Dorsolateral prefrontal cortex (tissue), 120 donors: ENCODE measurements at regions of chr1 and their contacts with region 1.

Region 1: DNA sequence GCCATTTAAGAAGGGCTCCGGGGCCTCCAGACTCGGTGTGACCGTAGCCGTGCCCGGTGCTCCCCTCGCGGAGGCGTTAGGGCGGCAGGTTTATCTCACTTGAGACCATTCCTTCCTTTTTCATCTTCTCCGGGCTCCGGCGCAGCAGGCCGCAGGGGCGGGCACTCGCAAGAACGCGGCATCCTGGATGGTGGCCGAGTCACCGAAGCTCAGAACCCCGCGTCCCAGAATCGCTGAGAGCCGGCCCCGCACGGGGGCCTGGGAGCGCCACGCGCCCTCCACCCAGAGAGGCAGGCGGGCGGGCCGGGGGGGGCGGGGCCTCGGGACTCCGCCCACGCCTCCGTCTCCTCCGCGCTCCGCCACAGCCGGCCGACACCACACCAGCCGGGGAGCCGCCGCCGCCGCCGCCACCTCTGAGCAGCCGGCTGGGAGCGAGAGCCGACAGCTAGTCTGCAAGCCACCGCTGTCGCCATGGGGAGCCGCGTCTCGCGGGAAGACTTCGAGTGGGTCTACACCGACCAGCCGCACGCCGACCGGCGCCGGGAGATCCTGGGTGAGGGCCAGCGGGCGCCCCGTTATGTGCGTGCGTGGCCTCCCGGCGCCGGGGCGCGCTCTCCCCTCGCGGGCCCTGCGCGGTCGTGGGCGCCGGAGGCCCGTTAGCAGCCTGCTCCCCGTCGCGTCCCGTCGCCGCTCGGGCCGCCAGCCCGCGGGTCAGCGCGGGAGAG is at the start of gene DEGS1:
- DNase-seq: peak; percentile 66 to 90 (median 79)
- H3K4me3 ChIP-seq: peak within 1 kb of the TSS; percentile 61 to 99 (median 93)
- H3K27ac ChIP-seq: peak within 1 kb of the TSS; percentile 42 to 98 (median 93)
- H3K27me3 ChIP-seq: no peaks in the 10 kb centered on the region
- CTCF ChIP-seq: peak in 25 of 56 donors; percentile 5 to 44 (median 18)
- total RNA-seq, gene DEGS1: 34.7 to 73.1 (median 54.6) TPM

Region 2: DNA sequence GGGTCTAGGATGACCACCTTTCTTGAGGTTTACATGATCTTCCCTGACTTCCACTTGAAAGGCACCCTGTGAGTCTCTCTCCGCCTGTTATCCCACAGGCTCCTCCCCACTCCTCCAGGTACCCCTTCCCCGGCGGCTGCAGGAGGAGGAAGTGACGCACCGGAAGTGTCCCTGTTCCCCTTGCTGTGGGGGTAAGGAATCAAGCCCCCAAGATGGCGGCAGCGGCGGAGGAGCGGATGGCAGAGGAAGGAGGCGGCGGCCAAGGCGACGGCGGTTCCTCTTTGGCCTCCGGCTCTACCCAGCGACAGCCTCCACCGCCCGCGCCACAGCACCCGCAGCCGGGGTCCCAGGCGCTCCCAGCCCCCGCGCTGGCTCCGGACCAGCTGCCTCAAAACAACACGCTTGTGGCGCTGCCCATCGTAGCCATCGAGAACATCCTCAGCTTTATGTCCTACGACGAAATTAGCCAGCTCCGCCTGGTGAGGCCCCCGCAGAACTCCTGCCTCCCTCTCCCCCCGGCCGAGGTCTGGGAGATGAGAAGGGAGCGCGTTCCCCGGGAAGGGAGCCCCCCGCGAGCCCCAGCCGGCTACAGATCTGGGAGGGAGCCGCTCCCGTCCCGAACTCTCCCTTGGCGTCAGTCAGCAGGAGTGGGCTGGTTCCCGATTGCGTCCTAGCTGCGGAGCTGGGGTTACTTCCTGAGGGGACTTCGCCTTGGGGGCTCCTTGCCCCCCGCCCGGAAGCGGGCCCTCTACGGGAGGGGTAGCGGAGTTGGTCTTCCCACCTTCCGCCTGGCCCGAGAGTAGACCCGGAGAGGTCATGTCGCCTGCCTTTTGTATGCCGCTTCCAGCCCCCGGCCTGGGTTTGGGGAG is 68.9 kb before region 1 on chr1 and contains the start of gene FBXO28:
- intact Hi-C with region 1: loop called (anchors 1 to 5 kb)
- DNase-seq: peak; percentile 87 to 99 (median 95)
- H3K4me3 ChIP-seq: peak within 1 kb of the TSS; percentile 69 to 99 (median 92)
- H3K27ac ChIP-seq: peak within 1 kb of the TSS; percentile 76 to 99 (median 95)
- H3K27me3 ChIP-seq: no peaks in the 10 kb centered on the region
- CTCF ChIP-seq: peak in 27 of 56 donors; percentile 2 to 50 (median 33)
- total RNA-seq, gene FBXO28: 21.1 to 49.6 (median 37.7) TPM

Region 3: DNA sequence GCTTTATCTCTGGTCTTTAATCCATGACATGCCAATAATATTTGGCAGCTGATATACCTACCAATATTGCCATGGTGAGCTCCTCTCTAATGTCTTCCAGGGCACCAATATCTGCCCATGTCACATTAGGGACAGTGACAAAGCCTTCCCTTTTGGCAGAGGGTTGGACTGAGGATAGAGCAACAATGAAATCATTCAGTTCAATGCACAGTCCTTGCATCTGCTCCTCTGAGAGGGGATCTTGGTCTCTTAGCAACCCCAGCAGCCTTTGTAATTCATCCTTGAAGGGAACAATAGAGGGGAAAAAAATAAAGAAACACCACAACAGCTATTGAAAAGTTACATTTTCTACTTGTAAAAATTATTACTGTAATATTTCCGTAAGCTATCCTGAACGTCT is 104.7 kb after region 1 on chr1:
- intact Hi-C with region 1: loop called in 1 of 2 experiments (anchors 2 kb)
- DNase-seq: peak in 2 of 10 donors; percentile 33 to 47
- H3K4me3 ChIP-seq: peak overlapping the region in 22 of 59 donors; percentile 3 to 50 (median 14)
- H3K27ac ChIP-seq: peak overlapping the region in 57 of 59 donors; percentile 3 to 91 (median 77)
- H3K27me3 ChIP-seq: no peaks in the 10 kb centered on the region
- CTCF ChIP-seq: peak in 3 of 56 donors; percentile 5 to 27 (median 11)

Region 4: DNA sequence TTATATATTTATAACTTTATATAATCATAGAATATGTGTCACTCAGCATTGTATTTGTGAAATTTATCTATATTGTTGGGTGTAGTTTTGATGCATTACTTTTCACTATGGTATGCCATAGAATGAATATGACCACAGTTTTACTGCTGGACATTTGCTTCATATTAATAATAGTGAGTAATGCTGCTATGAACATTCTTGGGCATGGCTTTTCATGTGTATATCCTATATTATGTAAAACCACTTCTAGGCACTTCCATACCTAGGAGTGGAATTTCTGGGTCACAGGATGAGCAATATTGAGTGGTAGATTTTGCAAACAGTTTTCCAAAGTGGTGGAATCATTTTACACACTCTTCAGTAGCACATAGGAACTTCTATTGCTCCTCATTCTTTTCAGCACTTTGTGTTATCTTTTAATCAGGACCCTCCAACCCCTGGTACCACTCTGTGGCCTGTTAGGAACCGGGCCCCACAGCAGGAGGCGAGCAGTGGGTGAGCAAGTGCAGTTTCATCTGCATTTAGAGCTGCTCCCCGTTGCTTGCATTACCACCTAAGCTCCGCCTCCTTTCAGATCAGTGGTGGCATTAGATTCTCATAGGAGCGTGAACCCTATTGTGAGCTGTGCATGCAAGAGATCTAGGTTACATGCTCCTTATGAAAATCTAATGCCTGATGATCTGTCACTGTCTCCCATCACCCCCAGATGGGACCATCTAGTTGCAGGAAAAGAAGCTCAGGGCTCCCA is 377.1 kb after region 1 on chr1:
- intact Hi-C with region 1: no loop called
- DNase-seq: no peak
- H3K4me3 ChIP-seq: no peak overlapping the region
- H3K27ac ChIP-seq: no peak overlapping the region
- H3K27me3 ChIP-seq: no peaks in the 10 kb centered on the region
- CTCF ChIP-seq: no peak